ENCODE measurements at regions of chr17 and their contacts with region 1.

Region 1: GRCh38 chr17:19377602-19378392 is 501 bp upstream of the MAPK7 start:
- DNase-seq: peak; percentile 98
- H3K4me3 Mint-ChIP-seq: peak overlapping the region; percentile 98
- H3K27ac Mint-ChIP-seq: peak overlapping the region; percentile 97
- H3K4me1 Mint-ChIP-seq: peaks cover 21% of the 10 kb centered on the region
- H3K27me3 Mint-ChIP-seq: no peaks in the 10 kb centered on the region

Region 2: GRCh38 chr17:19346351-19347255 is 31.2 kb before region 1 on chr17:
- intact Hi-C with region 1: no loop called
- DNase-seq: no peak
- H3K4me3 Mint-ChIP-seq: no peak overlapping the region
- H3K27ac Mint-ChIP-seq: no peak overlapping the region
- H3K4me1 Mint-ChIP-seq: peaks cover 3% of the 10 kb centered on the region
- H3K27me3 Mint-ChIP-seq: peaks cover 1% of the 10 kb centered on the region

Region 3: GRCh38 chr17:19362277-19363113 is 15.3 kb before region 1 on chr17 and contains the start of gene B9D1:
- intact Hi-C with region 1: loop called (anchors 1 kb)
- DNase-seq: peak; percentile 84
- H3K4me3 Mint-ChIP-seq: peak within 1 kb of the TSS; percentile 85
- H3K27ac Mint-ChIP-seq: peak within 1 kb of the TSS; percentile 29
- H3K4me1 Mint-ChIP-seq: peaks cover 3% of the 10 kb centered on the region
- H3K27me3 Mint-ChIP-seq: peaks cover 16% of the 10 kb centered on the region
- total RNA-seq, gene B9D1: 6.7 TPM in 2 replicates

Region 4: GRCh38 chr17:19507775-19508576 is 130.2 kb after region 1 on chr17:
- intact Hi-C with region 1: loop called (anchors 5 kb)
- DNase-seq: peak; percentile 75
- H3K4me3 Mint-ChIP-seq: peak overlapping the region; percentile 88
- H3K27ac Mint-ChIP-seq: peak overlapping the region; percentile 82
- H3K4me1 Mint-ChIP-seq: peaks cover 7% of the 10 kb centered on the region
- H3K27me3 Mint-ChIP-seq: peaks cover 22% of the 10 kb centered on the region

Region 5: DNA sequence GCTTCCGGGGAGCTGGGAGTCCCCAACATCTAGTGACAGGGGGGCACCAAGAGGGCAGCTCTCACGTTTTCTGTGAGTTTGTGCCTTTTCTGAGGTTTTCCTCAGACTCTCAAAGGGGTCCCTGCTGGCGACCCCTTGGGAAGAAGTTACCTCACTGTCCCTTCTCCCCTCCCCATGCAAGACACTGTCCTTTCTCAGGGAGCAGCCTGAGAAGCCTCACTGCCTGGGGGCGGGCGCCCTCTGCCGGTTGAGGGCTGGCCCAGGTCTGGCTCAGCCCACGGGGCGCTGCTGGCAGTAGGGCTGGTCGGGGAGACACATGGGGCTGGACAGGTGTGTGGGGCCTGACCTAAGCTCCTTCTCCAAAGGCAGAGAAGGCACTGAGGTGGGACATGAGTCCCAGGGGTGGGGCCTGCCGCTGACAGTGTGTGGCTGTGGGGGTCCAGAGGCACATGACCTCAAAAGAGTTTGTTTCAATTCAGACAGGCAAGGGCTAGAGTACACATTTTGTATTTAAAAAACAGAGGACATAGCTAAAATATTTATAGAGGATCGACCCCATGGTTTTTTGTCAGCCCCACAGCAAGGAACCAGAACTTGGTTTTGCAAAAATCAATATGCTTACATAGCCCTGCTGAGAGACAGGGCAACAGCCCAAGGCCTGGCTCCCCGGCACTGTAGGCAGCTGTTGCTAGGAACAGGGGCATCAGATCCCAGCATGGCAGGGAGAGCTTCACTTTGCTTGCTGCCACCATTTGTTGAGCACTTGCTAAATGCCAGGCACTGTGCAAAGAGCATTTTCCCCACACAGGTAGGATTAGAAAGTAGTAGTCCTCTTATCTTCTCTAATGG is 388.8 kb after region 1 on chr17:
- intact Hi-C with region 1: loop called (anchors 10 kb)
- DNase-seq: peak; percentile 61
- H3K4me3 Mint-ChIP-seq: no peak overlapping the region
- H3K27ac Mint-ChIP-seq: no peak overlapping the region
- H3K4me1 Mint-ChIP-seq: peaks cover 8% of the 10 kb centered on the region
- H3K27me3 Mint-ChIP-seq: no peaks in the 10 kb centered on the region

Measured in activated T-helper 2 cell treated with anti-CD3 and anti-CD28 coated beads, Interferon-gamma antibody, Interleukin-2, Interleukin-4, amounts not matched to agents 10 μg/mL and 5 μg/mL and 100 μg/mL, durations not matched to agents 14 hours and 24 hours and 36 hours (primary cell).